ENCODE measurements at regions of chr20 and their contacts with region 1.

Region 1: GRCh38 chr20:42949950-42950349 is 239.8 kb downstream of the PTPRT start:
- ATAC-seq: peak in 1 of 8 experiments; percentile 30
- H3K4me3 ChIP-seq: no peak overlapping the region
- H3K27ac ChIP-seq: no peak overlapping the region
- H3K4me1 ChIP-seq: peaks cover 0 to 2% of the 10 kb centered on the region in 2 donors

Region 2: GRCh38 chr20:42672403-42672802 is 277.5 kb before region 1 on chr20:
- in situ Hi-C with region 1: no loop called
- ATAC-seq: no peak
- H3K4me3 ChIP-seq: no peak overlapping the region
- H3K27ac ChIP-seq: no peak overlapping the region
- H3K4me1 ChIP-seq: no peaks in the 10 kb centered on the region

Region 3: DNA sequence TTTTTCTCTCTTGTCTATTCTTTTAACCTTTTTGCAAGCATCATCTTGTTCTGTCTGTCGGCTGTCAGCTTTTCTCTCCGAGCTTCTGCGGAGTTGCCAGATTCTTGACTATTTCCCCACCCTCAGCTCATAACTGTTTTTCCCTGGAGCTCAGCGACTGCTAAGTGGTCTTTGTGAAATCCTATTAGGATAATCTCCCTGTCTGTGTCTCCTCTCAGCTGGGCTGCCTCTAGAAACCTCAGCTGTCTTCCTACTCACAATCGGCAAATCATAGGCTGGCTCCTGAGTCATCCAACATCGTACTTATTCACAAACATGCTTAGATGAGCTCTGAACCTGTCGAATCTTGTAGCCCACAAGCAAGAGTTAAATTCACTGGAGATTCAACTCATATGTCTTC is 92.5 kb before region 1 on chr20:
- in situ Hi-C with region 1: loop called in 1 of 9 experiments (anchors 25 kb)
- ATAC-seq: no peak
- H3K4me3 ChIP-seq: no peak overlapping the region
- H3K27ac ChIP-seq: no peak overlapping the region
- H3K4me1 ChIP-seq: no peaks in the 10 kb centered on the region

Measured in motor neuron (in vitro differentiated cells).